ENCODE measurements at regions of chr6 and their contacts with region 1.

Region 1: DNA sequence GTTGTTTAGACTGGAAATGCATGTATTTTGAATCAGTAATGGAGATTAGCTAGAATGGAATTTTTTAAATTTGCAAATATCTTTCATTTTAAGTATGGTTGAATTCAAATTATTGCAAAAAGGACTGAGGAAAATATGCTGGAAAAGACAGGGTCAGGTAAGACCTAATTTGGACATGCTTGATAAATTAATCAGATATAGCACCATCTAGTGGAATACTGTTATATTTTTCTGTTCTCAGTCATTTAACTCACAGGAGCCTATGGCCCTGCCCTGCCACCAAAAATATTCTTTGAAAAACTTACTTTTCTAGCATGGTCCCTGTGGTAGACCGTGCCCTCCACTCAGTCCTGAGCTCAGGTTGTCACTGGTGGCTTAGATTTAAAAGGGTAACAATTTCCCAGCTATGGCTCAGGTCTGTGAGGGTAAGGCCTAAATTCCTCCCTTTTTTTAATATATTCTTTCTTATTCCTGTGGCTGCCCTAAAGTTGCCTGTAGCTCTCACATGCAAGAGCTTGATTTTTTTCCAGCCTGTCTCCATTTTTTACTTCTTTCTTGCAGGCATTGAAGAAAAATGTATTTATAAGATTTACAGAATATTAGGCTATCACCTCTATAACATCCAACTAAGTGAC is 25.3 kb upstream of the KIAA1586 start:
- DNase-seq: peak; percentile 8
- H3K4me3 ChIP-seq: no peak overlapping the region
- H3K27ac ChIP-seq: no peak overlapping the region
- H3K27me3 ChIP-seq: no peaks in the 10 kb centered on the region
- CTCF ChIP-seq: peak; percentile 50

Region 2: DNA sequence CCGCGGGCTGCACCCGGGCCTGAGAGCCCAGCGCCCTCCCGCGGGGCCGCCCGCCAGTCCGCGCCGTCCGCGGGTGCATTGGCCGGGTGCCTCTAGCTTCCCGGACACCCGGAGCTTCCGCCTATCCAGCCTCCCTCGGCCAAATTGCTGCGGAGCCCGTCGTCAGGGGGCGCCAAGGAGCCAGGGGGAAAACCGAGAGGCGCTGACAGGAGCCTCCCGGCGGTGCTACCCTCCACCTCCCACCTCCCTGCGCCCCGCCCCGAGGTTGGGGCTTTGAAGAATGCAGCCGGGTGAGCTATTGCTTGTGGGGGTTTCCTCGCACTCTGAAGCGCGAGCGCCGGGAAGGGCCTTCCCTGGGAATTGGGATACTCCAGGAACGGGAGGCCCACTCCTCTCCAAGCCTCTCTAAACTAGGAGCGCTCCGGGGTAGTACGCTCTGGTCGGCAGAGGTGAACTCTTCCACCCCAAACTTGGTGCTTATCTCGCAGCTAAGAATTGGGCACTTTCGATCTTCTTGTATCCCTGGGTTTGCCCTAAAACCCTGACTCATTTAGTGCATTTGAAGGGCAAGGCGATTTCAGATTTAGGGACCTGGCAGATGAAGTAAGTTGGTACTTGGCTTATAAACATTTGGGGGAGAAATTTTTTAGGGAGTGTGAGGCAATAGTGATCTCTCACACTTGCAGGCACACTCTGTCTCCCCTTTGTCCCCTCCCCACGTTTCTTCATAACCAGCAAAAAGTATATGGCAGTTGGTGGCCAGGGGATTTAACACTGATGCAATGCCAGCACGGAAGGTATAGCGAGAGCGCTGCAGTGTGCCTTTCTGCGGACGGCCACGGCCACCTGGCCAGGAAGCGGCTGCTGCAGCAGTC is 65.8 kb before region 1 on chr6:
- CTCF ChIA-PET with region 1: interaction called, 19 read pairs
- POLR2A ChIA-PET with region 1: no interaction called
- DNase-seq: peak; percentile 79
- H3K4me3 ChIP-seq: peak overlapping the region; percentile 73
- H3K27ac ChIP-seq: peak overlapping the region; percentile 79
- H3K27me3 ChIP-seq: no peaks in the 10 kb centered on the region
- CTCF ChIP-seq: peak; percentile 87

Region 3: GRCh38 chr6:56984361-56984760 is 36.8 kb before region 1 on chr6:
- CTCF ChIA-PET with region 1: interaction called, 13 read pairs
- POLR2A ChIA-PET with region 1: no interaction called
- DNase-seq: no peak
- H3K4me3 ChIP-seq: no peak overlapping the region
- H3K27ac ChIP-seq: no peak overlapping the region
- H3K27me3 ChIP-seq: no peaks in the 10 kb centered on the region
- CTCF ChIP-seq: no peak

Region 4: DNA sequence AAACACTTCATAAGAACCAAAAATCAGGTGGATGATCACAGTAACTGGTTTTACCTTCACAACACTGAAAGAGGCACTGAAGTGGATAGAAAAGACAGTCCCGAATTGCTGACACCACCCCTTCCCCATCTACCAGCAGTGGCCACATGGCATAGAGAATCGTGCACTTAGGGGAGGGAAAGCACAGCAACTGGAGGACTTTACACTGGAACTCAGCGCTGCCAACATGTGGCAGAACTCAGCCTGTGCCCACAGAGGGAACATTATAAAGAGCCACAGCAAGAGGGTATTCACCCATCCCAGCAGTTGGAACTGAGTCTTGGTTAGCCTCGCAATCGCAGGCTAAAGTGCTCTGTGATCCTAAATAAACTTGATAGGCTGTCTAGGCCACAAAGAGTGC is 18.8 kb after region 1 on chr6:
- CTCF ChIA-PET with region 1: interaction called, 15 read pairs
- POLR2A ChIA-PET with region 1: no interaction called
- DNase-seq: no peak
- H3K4me3 ChIP-seq: no peak overlapping the region
- H3K27ac ChIP-seq: no peak overlapping the region
- H3K27me3 ChIP-seq: peaks cover 4% of the 10 kb centered on the region
- CTCF ChIP-seq: no peak